H1 (cell line): ENCODE measurements at regions of chr20 and their contacts with region 1.

Region 1: DNA sequence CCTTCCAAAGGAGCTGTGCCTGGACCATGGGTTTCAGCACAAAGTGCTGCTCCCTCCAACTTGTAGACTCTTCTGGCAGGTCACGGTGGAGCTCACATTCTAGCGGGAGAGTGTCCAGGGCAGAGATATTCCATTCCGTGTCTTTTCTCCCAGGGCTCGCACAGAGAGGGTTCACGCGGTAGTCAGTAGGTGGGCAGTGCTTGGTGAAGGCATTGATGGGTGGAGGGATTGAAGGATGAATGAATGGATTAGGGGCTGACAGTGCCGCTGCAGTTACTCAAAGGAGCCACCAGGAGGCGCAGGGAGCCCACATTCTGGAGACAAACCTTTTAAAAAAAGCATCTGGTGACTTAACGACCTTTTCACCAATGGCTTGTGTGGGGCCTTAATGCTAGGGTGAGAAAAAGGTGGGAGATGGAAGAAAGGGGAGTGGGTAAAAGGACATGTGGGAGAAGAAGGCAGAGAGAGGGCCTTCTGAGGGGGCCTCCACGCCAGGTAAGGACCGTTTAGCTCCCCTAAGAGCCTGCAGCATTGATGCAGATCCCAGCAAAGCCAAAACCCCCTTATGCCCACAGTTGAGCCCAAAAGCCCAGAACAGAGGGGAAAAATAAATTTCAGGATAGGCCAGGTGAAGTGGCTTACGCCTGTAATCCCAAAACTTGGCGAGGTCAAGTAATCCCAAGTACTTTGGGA is 17.5 kb upstream of the FAM110A start:
- DNase-seq: peak; percentile 41 to 82
- H3K4me3 ChIP-seq: no peak overlapping the region
- H3K27ac ChIP-seq: no peak overlapping the region
- H3K4me1 ChIP-seq: no peaks in the 10 kb centered on the region; a peak in 2 of 7 replicates
- H3K27me3 ChIP-seq: no peaks in the 10 kb centered on the region
- CTCF ChIP-seq: peak; percentile 83 to 97 (median 91)
- EP300 ChIP-seq: no peak
- POLR2A ChIP-seq: no peak
- RAD21 ChIP-seq: peak; percentile 96

Region 2: GRCh38 chr20:833450-834150 is 17.5 kb after region 1 on chr20 and contains the start of gene FAM110A:
- CTCF ChIA-PET with region 1: interaction called, 16 read pairs
- POLR2A ChIA-PET with region 1: interaction called, 7 read pairs
- DNase-seq: peak; percentile 70 to 93
- H3K4me3 ChIP-seq: peak within 1 kb of the TSS; percentile 42 to 76 (median 70)
- H3K27ac ChIP-seq: peak within 1 kb of the TSS; percentile 87; the same call in 1 of the 2 replicates
- H3K4me1 ChIP-seq: peaks cover 0 to 3% (median 1%) of the 10 kb centered on the region in 4 experiments; a peak in 1 of 7 replicates
- H3K27me3 ChIP-seq: peaks cover 0 to 15% (median 13%) of the 10 kb centered on the region in 4 experiments; a peak in 6 of 7 replicates
- CTCF ChIP-seq: no peak
- EP300 ChIP-seq: peak in 1 of 2 experiments; percentile 96; a peak in 2 of 3 replicates
- POLR2A ChIP-seq: no peak
- RAD21 ChIP-seq: no peak; a peak in 1 of 4 replicates
- total RNA-seq, gene FAM110A: 10.9 and 13.1 TPM in 2 replicates

Region 3: DNA sequence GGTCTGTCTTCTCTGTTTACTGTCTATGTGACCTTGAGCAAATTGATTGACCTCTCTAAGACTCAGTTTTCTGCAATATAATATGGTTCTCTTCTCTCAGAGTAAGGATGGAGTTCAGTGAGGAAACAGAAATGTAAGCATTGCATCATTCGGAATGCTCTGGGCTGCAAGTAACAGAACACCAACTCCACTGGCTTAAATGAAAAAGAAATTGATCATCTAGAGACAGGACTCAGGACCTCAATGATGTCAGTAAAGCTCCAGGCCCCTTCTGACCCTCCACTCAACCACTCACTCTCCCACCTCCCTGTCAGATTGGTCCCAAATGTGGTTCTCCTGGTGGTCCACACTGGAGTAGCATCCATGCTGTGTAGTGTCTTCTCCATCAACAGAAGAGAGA is 49.4 kb after region 1 on chr20:
- CTCF ChIA-PET with region 1: interaction called, 13 read pairs
- POLR2A ChIA-PET with region 1: no interaction called
- DNase-seq: no peak
- H3K4me3 ChIP-seq: no peak overlapping the region
- H3K27ac ChIP-seq: no peak overlapping the region
- H3K4me1 ChIP-seq: peaks cover 0 to 3% (median 1%) of the 10 kb centered on the region in 4 experiments; a peak in 2 of 7 replicates
- H3K27me3 ChIP-seq: no peaks in the 10 kb centered on the region; a peak in 3 of 7 replicates
- CTCF ChIP-seq: no peak
- EP300 ChIP-seq: no peak
- POLR2A ChIP-seq: no peak
- RAD21 ChIP-seq: no peak

Region 4: DNA sequence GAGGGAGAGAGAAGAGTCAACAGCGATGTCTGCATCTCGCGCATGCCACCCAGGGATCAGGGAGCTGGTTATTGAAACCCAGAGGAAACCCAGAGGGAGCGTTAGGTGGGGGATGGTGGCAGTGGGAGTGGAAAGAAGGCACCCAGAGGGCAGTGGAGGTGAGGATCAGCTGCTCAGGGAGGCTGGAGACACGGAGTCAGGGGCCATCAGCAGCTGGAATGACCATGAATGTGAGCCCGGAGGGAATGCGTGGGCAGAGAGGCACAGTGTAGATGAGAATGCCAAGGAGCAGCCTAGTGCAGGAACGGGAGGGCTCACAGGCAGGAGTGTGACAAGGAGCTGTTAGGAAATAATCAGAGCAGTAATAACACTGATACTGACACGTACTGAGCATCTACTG is 149.9 kb after region 1 on chr20:
- CTCF ChIA-PET with region 1: interaction called, 10 read pairs
- POLR2A ChIA-PET with region 1: no interaction called
- DNase-seq: no peak
- H3K4me3 ChIP-seq: no peak overlapping the region
- H3K27ac ChIP-seq: no peak overlapping the region
- H3K4me1 ChIP-seq: no peaks in the 10 kb centered on the region
- H3K27me3 ChIP-seq: no peaks in the 10 kb centered on the region
- CTCF ChIP-seq: no peak
- EP300 ChIP-seq: no peak
- POLR2A ChIP-seq: no peak
- RAD21 ChIP-seq: no peak